ENCODE measurements at regions of chr2 and their contacts with region 1.

Region 1: GRCh38 chr2:106542811-106543259 is 55.7 kb downstream of the CD8B2 start:
- DNase-seq: peak; percentile 80
- H3K4me3 ChIP-seq: peak overlapping the region in 2 of 4 donors; percentile 9 to 27
- H3K27ac ChIP-seq: no peak overlapping the region
- H3K4me1 ChIP-seq: peaks cover 0 to 17% (median 8%) of the 10 kb centered on the region in 4 donors
- H3K27me3 ChIP-seq: peaks cover 0 to 7% (median 0%) of the 10 kb centered on the region in 3 donors
- CTCF ChIP-seq: peak; percentile 63 to 94 (median 78)
- EP300 ChIP-seq: no peak
- POLR2A ChIP-seq: no peak

Region 2: GRCh38 chr2:106104332-106105062 is 438.3 kb before region 1 on chr2:
- intact Hi-C with region 1: loop called (anchors 2 kb)
- DNase-seq: no peak
- H3K4me3 ChIP-seq: no peak overlapping the region
- H3K27ac ChIP-seq: no peak overlapping the region
- H3K4me1 ChIP-seq: peaks cover 0 to 25% (median 8%) of the 10 kb centered on the region in 4 donors
- H3K27me3 ChIP-seq: no peaks in the 10 kb centered on the region
- CTCF ChIP-seq: peak; percentile 86 to 95 (median 92)
- EP300 ChIP-seq: no peak
- POLR2A ChIP-seq: no peak